ENCODE measurements at regions of chr5 and their contacts with region 1.

Region 1: DNA sequence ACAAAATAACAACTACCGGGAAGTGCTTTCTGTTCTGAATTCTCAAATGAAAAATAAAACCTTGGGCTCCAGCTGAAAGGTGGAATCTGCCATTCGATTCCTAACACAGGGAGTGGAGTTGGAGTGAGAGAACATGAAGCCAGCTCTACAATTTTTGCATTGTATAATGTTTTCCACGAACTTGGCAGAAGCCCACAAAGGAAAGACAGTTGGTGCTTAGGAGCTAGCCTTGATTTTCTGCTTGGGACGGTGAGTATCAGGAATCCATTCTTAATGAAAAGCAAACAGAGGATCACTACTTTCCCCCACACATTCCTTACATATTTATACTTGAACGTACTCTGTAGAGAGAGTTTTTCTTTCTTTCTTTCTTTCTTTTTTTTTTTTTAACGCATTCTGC is 74.2 kb upstream of the FBXL7 start:
- DNase-seq: no peak
- H3K4me3 ChIP-seq: no peak overlapping the region
- H3K27ac ChIP-seq: no peak overlapping the region
- H3K4me1 ChIP-seq: no peaks in the 10 kb centered on the region
- H3K27me3 ChIP-seq: peaks cover 1 to 15% of the 10 kb centered on the region in 2 experiments
- CTCF ChIP-seq: no peak
- POLR2A ChIP-seq: no peak

Region 2: GRCh38 chr5:15440434-15440833 is 14.7 kb after region 1 on chr5:
- CTCF ChIA-PET with region 1: interaction called, 10 read pairs
- POLR2A ChIA-PET with region 1: no interaction called
- dilution Hi-C with region 1: no loop called
- intact Hi-C with region 1: no loop called
- DNase-seq: no peak
- H3K4me3 ChIP-seq: no peak overlapping the region
- H3K27ac ChIP-seq: no peak overlapping the region
- H3K4me1 ChIP-seq: no peaks in the 10 kb centered on the region
- H3K27me3 ChIP-seq: peaks cover 5 to 8% of the 10 kb centered on the region in 2 experiments
- CTCF ChIP-seq: no peak
- POLR2A ChIP-seq: no peak

Measured in endothelial cell of umbilical vein (primary cell).